OCI-LY7 (cell line): ENCODE measurements at regions of chr11 and their contacts with region 1.

Region 1: DNA sequence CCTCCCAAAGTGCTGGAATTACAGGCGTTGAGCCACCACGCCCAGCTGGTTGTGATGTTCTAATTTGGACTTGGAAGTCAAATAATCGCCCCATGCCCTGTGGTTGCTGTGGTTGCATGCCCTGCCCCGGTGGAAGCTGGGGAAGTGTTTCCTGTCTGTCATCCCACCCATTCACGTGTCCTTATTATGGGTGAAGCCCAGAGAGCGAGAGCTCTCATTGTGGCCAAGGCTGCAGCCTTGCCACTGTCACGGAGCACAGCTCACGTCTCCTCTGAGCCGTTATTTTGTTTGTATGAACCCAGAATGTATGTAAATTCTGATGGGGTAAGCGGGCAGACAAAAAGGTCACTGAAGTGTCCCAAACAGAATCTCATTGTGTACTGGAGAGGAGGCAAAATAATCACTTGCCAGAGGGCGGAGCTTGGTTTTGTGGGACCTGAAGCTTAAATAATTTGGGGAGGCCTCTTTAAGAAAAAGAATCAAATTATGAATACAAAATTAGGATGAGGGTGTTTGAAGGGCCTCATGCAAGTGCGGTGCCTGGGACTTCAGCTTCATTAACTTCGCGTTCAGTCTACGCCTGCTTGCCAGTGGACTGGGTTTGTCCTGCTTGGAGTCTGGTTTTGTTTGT is 25.8 kb upstream of the TREH start:
- DNase-seq: peak; percentile 32
- H3K4me3 ChIP-seq: no peak overlapping the region
- H3K27ac ChIP-seq: no peak overlapping the region
- H3K4me1 ChIP-seq: peaks cover 14% of the 10 kb centered on the region
- CTCF ChIP-seq: no peak

Region 2: GRCh38 chr11:118715245-118715831 is 10.1 kb after region 1 on chr11:
- CTCF ChIA-PET with region 1: no interaction called
- POLR2A ChIA-PET with region 1: interaction called, 14 read pairs
- intact Hi-C with region 1: no loop called
- DNase-seq: peak; percentile 23
- H3K4me3 ChIP-seq: no peak overlapping the region
- H3K27ac ChIP-seq: no peak overlapping the region
- H3K4me1 ChIP-seq: peaks cover 10% of the 10 kb centered on the region
- CTCF ChIP-seq: no peak